Caco-2 (cell line): ENCODE measurements at regions of chr5 and their contacts with region 1.

Region 1: GRCh38 chr5:172697123-172698121 is 56.4 kb downstream of the NEURL1B start:
- DNase-seq: peak; percentile 91 to 92
- H3K4me3 ChIP-seq: peak overlapping the region; percentile 44
- H3K4me3 Mint-ChIP-seq: peak overlapping the region; percentile 75
- H3K27ac Mint-ChIP-seq: peak overlapping the region; percentile 69
- H3K4me1 ChIP-seq: peaks cover 24% of the 10 kb centered on the region
- H3K4me1 Mint-ChIP-seq: peaks cover 21% of the 10 kb centered on the region
- H3K27me3 ChIP-seq: no peaks in the 10 kb centered on the region
- H3K27me3 Mint-ChIP-seq: no peaks in the 10 kb centered on the region
- CTCF ChIP-seq: peak; percentile 90 to 92

Region 2: DNA sequence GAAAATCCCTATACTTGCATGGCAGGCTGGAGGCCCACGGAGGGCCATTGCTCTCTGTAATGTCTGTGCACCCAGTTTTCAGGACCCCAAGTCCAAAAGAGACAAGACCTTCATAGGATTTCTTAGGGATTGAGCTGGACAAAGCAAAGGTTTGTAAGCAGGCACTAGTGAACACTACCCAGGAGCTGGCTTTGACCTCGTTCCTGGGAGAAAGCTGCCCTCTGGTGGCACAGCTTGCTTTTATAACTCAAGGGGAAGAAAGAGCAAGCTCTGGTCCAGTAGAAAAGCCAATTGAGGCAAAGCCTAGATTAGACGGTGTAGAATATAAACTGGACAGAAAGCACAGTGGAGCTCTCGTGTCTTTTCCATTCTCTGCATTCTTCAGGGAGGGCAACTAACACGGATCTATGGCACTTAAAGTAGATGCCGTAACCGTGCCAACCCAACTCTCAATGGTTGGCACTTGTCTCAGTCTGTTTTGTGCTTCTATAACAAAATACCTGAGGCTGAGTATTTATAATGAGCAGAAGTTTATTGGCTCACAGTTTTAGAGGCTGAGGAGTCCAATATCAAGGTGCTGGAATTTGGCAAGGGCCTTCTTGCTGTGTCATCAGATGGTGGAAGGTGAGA is 1906.0 kb before region 1 on chr5:
- CTCF ChIA-PET with region 1: no interaction called
- POLR2A ChIA-PET with region 1: no interaction called
- intact Hi-C with region 1: no loop called
- DNase-seq: peak; percentile 69 to 80
- H3K4me3 ChIP-seq: no peak overlapping the region
- H3K4me3 Mint-ChIP-seq: no peak overlapping the region
- H3K27ac Mint-ChIP-seq: no peak overlapping the region
- H3K4me1 ChIP-seq: no peaks in the 10 kb centered on the region
- H3K4me1 Mint-ChIP-seq: no peaks in the 10 kb centered on the region
- H3K27me3 ChIP-seq: peaks cover 2% of the 10 kb centered on the region; the same call in 1 of the 2 replicates
- H3K27me3 Mint-ChIP-seq: peaks cover 4% of the 10 kb centered on the region
- CTCF ChIP-seq: peak; percentile 77 to 78

Region 3: DNA sequence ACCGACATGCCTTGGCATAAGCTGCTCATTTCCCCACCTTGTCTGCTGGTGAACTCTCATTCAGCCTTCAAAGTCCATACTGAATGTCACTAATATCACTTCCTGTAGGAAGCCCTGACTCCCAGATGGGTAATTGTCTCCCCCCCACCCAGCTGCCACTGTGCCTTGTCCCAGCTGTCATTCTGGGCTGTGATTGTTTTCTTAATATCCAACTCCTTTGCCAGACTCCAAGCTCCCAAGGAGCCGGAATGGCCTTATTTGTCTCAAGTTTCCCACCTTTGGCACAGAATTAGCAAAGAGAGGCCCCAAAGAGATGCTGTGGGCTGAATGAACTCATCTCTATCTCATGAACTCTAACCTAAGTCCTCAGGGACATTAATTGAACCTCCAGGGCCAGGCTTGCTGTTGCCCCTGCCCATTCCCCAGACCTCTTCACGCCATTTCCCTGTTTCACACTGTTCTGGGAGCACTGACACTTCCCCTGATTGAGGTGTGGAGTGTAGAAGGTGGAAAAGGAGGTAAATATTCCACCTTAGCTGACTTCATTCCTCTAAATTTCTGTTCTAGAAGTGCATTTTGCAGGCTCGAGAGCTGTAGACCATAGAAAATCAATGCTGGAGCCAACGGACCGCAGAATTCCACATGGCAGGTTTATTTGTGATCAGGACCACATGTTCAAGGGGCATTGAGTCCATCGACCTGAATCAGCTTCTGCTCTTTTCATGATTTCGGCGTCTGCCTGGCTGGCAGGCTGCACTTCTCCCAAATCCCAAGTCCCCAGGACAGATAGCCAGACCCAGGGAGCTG is 238.2 kb before region 1 on chr5:
- CTCF ChIA-PET with region 1: no interaction called
- POLR2A ChIA-PET with region 1: interaction called, 3 read pairs
- intact Hi-C with region 1: loop called (anchors 1 kb)
- DNase-seq: no peak
- H3K4me3 ChIP-seq: no peak overlapping the region
- H3K4me3 Mint-ChIP-seq: no peak overlapping the region
- H3K27ac Mint-ChIP-seq: no peak overlapping the region
- H3K4me1 ChIP-seq: 0 out of 2 replicates have a peak, but pooled peaks cover 4% of the 10 kb centered on the region
- H3K4me1 Mint-ChIP-seq: peaks cover 6% of the 10 kb centered on the region
- H3K27me3 ChIP-seq: no peaks in the 10 kb centered on the region
- H3K27me3 Mint-ChIP-seq: no peaks in the 10 kb centered on the region
- CTCF ChIP-seq: no peak

Region 4: GRCh38 chr5:172479044-172479783 is 218.2 kb before region 1 on chr5:
- CTCF ChIA-PET with region 1: interaction called, 5 read pairs
- POLR2A ChIA-PET with region 1: no interaction called
- intact Hi-C with region 1: loop called (anchors 1 kb)
- DNase-seq: peak; percentile 86 to 88
- H3K4me3 ChIP-seq: no peak overlapping the region
- H3K4me3 Mint-ChIP-seq: no peak overlapping the region
- H3K27ac Mint-ChIP-seq: no peak overlapping the region
- H3K4me1 ChIP-seq: no peaks in the 10 kb centered on the region; the same call in 1 of the 2 replicates
- H3K4me1 Mint-ChIP-seq: no peaks in the 10 kb centered on the region
- H3K27me3 ChIP-seq: no peaks in the 10 kb centered on the region
- H3K27me3 Mint-ChIP-seq: peaks cover 2% of the 10 kb centered on the region
- CTCF ChIP-seq: peak; percentile 91 to 95

Region 5: DNA sequence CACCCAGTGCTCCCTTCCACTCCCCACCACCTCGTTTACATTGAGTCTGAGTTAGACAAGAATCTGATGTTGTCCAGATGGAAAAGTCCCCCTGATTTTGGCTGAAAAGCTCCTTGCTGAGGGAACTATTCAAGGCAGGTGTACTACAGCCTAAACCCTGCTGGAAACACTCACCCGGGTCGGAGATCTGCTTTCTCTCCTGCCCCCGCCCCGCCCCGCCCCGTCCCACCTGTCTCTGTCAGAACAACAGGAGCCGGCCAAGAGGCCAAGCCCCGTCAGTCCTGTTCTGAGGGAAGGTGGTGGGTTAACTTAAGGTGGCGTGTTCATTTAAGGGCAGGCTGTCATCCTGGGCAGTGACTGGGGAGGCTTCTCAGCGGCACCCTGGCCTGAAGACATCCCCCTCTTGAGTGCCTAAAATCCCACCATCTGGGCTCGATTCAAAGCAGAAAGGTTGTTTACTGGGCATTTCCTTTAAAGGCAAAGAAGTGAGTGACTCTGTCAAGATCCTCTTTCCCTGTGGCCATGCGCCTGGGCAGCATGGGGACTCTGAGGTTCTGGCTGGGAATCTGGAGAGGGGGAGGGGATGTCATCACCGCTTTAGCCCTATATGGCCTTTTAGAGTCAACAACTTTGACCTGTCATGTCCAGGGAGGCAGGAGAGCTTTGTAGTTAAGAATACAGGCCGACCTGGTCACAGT is 127.4 kb before region 1 on chr5:
- CTCF ChIA-PET with region 1: no interaction called
- POLR2A ChIA-PET with region 1: no interaction called
- intact Hi-C with region 1: loop called (anchors 5 kb)
- DNase-seq: peak; percentile 52 to 60
- H3K4me3 ChIP-seq: no peak overlapping the region
- H3K4me3 Mint-ChIP-seq: peak overlapping the region; percentile 21
- H3K27ac Mint-ChIP-seq: no peak overlapping the region
- H3K4me1 ChIP-seq: peaks cover 7% of the 10 kb centered on the region
- H3K4me1 Mint-ChIP-seq: peaks cover 15% of the 10 kb centered on the region
- H3K27me3 ChIP-seq: no peaks in the 10 kb centered on the region
- H3K27me3 Mint-ChIP-seq: no peaks in the 10 kb centered on the region
- CTCF ChIP-seq: no peak

Region 6: GRCh38 chr5:172640822-172641358 is 56.5 kb before region 1 on chr5 and contains the start of gene NEURL1B:
- CTCF ChIA-PET with region 1: interaction called, 3 read pairs
- POLR2A ChIA-PET with region 1: no interaction called
- intact Hi-C with region 1: loop called (anchors 2 kb)
- DNase-seq: peak; percentile 77 to 86
- H3K4me3 ChIP-seq: peak within 1 kb of the TSS; percentile 59
- H3K4me3 Mint-ChIP-seq: peak within 1 kb of the TSS; percentile 61
- H3K27ac Mint-ChIP-seq: no peak within 1 kb of the TSS
- H3K4me1 ChIP-seq: peaks cover 6% of the 10 kb centered on the region; the same call in 1 of the 2 replicates
- H3K4me1 Mint-ChIP-seq: no peaks in the 10 kb centered on the region
- H3K27me3 ChIP-seq: no peaks in the 10 kb centered on the region
- H3K27me3 Mint-ChIP-seq: peaks cover 4% of the 10 kb centered on the region
- CTCF ChIP-seq: no peak
- total RNA-seq, gene NEURL1B: 6.0 and 7.6 TPM in 2 replicates

Region 7: GRCh38 chr5:172666251-172666650 is 31.2 kb before region 1 on chr5:
- CTCF ChIA-PET with region 1: interaction called, 22 read pairs
- POLR2A ChIA-PET with region 1: no interaction called
- intact Hi-C with region 1: loop called (anchors 1 kb)
- DNase-seq: peak; percentile 49 to 59
- H3K4me3 ChIP-seq: no peak overlapping the region
- H3K4me3 Mint-ChIP-seq: no peak overlapping the region
- H3K27ac Mint-ChIP-seq: no peak overlapping the region
- H3K4me1 ChIP-seq: peaks cover 7% of the 10 kb centered on the region
- H3K4me1 Mint-ChIP-seq: no peaks in the 10 kb centered on the region
- H3K27me3 ChIP-seq: no peaks in the 10 kb centered on the region
- H3K27me3 Mint-ChIP-seq: no peaks in the 10 kb centered on the region
- CTCF ChIP-seq: peak in 1 of 2 experiments; percentile 31

Region 8: DNA sequence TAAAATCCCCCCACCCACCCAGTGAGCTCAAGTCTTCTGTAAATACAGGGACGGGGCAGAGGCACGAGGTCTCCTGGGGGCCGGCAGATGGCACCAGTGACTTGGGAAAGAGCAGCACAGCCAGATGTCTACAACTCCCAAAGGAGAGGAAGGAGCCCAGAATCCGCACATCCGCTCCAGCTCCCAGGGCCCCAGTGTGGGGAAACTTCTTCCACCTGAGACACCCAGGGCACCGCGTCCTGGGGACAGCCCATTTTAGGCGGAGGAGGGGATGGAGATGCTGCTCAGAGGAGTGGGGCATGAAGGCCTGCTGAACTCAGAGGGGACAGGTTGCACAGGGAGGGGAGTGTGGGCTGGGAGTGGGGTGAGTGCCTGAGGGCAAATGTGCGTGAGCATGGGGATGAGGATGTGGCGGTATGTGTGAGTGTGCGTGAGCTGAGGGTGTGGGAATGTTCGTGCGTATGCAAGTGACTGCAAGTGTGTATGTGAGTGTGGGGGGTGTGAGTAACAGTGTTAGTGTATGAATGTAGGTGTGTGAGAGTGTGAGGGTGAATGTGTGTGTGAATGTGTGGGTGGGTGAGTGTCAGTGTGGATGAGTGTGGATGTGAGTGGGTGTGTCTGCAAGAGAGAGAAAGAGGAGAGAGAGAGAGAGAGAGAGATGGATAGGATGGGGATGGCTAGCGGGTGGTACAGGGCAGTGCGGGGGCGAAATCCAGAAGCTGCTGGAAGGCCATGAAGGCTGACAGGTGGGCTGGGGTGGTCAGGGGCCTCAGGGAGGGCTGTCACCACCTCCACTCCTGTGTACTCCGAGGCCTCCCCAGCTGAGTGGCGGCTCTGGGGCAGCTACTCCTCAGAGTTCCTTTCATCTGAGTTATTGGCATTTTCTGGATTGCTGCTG is 10.1 kb after region 1 on chr5:
- CTCF ChIA-PET with region 1: interaction called, 13 read pairs
- POLR2A ChIA-PET with region 1: no interaction called
- intact Hi-C with region 1: no loop called
- DNase-seq: peak; percentile 73 to 75
- H3K4me3 ChIP-seq: no peak overlapping the region
- H3K4me3 Mint-ChIP-seq: no peak overlapping the region
- H3K27ac Mint-ChIP-seq: no peak overlapping the region
- H3K4me1 ChIP-seq: no peaks in the 10 kb centered on the region
- H3K4me1 Mint-ChIP-seq: no peaks in the 10 kb centered on the region
- H3K27me3 ChIP-seq: no peaks in the 10 kb centered on the region
- H3K27me3 Mint-ChIP-seq: no peaks in the 10 kb centered on the region
- CTCF ChIP-seq: peak; percentile 59 to 86